ENCODE measurements at regions of chr1 and their contacts with region 1.

Region 1: GRCh38 chr1:218330043-218330623 is 15.0 kb upstream of the TGFB2 start:
- DNase-seq: peak; percentile 22
- ATAC-seq: peak; percentile 62
- H3K4me3 ChIP-seq: no peak overlapping the region
- H3K27ac ChIP-seq: peak overlapping the region; percentile 59; the same call in 1 of the 2 replicates
- H3K4me1 ChIP-seq: no peaks in the 10 kb centered on the region; the same call in 1 of the 2 replicates
- H3K27me3 ChIP-seq: no peaks in the 10 kb centered on the region
- CTCF ChIP-seq: peak; percentile 61; the same call in 1 of the 2 replicates

Region 2: GRCh38 chr1:218303176-218303879 is 26.8 kb before region 1 on chr1:
- CTCF ChIA-PET with region 1: no interaction called
- POLR2A ChIA-PET with region 1: interaction called, 12 read pairs
- in situ Hi-C with region 1: no loop called
- intact Hi-C with region 1: no loop called
- DNase-seq: no peak
- ATAC-seq: no peak
- H3K4me3 ChIP-seq: no peak overlapping the region
- H3K27ac ChIP-seq: no peak overlapping the region
- H3K4me1 ChIP-seq: no peaks in the 10 kb centered on the region
- H3K27me3 ChIP-seq: no peaks in the 10 kb centered on the region
- CTCF ChIP-seq: no peak

Region 3: GRCh38 chr1:219066631-219067349 is 736.7 kb after region 1 on chr1:
- CTCF ChIA-PET with region 1: no interaction called
- POLR2A ChIA-PET with region 1: no interaction called
- in situ Hi-C with region 1: no loop called
- intact Hi-C with region 1: loop called (anchors 2 kb)
- DNase-seq: peak; percentile 36
- ATAC-seq: peak; percentile 71
- H3K4me3 ChIP-seq: no peak overlapping the region
- H3K27ac ChIP-seq: peak overlapping the region; percentile 63; the same call in 1 of the 2 replicates
- H3K4me1 ChIP-seq: peaks cover 5% of the 10 kb centered on the region; the same call in 1 of the 2 replicates
- H3K27me3 ChIP-seq: no peaks in the 10 kb centered on the region
- CTCF ChIP-seq: peak; percentile 65; the same call in 1 of the 2 replicates

Region 4: DNA sequence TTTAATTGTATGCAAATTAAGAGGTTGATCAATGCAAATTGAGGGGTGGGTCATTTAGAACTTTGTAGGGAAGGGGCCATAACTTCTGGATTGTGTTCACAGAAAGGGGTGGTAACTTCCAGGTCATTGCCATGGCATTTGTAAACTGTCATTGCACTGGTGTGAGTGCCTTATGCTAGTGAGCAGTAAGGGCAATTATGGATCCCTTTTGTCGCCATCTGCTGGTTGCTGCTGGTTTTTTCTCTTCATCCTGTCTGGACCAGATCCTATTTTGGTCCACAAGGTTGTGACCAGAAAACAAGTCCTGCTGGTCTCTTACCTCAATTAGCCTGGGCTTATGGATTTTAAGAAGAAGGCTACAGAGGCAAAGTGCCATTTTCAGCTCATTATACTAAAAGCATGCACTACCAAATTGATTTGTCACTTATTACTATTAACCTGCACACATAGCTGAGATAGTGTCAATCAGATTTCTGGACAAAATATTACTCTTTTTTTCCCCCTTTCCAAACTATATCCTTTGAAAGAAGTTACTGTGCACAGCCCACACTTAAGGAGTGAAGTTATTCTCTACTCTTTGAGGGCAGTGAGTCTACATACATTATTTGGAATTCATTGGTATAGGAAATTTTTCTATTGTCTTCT is 1086.6 kb after region 1 on chr1:
- CTCF ChIA-PET with region 1: no interaction called
- POLR2A ChIA-PET with region 1: no interaction called
- in situ Hi-C with region 1: no loop called
- intact Hi-C with region 1: loop called (anchors 5 kb)
- DNase-seq: peak; percentile 53
- ATAC-seq: peak; percentile 91
- H3K4me3 ChIP-seq: no peak overlapping the region
- H3K27ac ChIP-seq: no peak overlapping the region
- H3K4me1 ChIP-seq: no peaks in the 10 kb centered on the region
- H3K27me3 ChIP-seq: no peaks in the 10 kb centered on the region
- CTCF ChIP-seq: peak; percentile 88

Region 5: DNA sequence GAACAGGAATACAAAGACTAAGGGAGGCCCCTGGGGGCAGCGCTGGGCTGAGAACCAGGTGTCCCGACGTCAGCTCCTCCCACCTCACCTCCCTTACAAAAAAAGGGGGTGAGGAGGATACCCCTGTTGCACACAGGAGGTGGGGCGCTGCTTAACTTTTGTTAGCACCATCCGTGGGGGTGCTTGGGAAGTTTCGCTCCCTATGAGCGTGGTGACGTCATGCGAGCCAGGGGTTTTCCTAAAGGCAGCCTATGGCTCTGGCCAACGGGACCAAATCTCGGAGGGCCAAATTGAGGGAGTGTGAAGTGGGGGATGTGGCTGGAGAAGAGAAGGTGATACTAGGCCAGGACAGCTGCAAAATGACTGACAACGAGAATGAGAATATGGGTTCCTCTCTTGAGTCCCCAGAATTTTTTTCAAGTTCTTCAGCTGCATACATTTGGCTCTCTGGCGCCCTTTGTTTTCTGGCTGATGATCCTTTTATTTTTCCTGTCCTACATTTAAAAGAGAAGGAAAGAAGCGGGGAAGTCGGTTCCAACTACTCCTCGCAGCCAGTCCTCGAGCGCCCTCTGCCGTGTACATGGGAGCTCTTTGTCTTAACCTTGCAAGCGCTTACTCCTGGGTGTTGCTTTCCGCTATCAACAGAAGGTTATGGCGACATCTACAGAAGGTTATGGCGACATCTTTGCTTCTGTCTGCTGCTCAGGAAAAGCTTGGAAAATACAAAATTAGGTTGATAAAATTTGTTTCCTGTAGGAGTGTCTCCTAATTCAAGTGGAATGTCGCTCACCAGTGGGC is 1330.7 kb after region 1 on chr1:
- CTCF ChIA-PET with region 1: no interaction called
- POLR2A ChIA-PET with region 1: no interaction called
- in situ Hi-C with region 1: no loop called
- intact Hi-C with region 1: loop called (anchors 5 kb)
- DNase-seq: peak; percentile 71
- ATAC-seq: peak; percentile 96
- H3K4me3 ChIP-seq: peak overlapping the region in 1 of 2 experiments; percentile 26; a peak in 2 of 4 replicates
- H3K27ac ChIP-seq: no peak overlapping the region
- H3K4me1 ChIP-seq: no peaks in the 10 kb centered on the region
- H3K27me3 ChIP-seq: no peaks in the 10 kb centered on the region; the same call in 1 of the 2 replicates
- CTCF ChIP-seq: peak; percentile 95